K562 (cell line): ENCODE measurements at regions of chr1 and their contacts with region 1.

Region 1: DNA sequence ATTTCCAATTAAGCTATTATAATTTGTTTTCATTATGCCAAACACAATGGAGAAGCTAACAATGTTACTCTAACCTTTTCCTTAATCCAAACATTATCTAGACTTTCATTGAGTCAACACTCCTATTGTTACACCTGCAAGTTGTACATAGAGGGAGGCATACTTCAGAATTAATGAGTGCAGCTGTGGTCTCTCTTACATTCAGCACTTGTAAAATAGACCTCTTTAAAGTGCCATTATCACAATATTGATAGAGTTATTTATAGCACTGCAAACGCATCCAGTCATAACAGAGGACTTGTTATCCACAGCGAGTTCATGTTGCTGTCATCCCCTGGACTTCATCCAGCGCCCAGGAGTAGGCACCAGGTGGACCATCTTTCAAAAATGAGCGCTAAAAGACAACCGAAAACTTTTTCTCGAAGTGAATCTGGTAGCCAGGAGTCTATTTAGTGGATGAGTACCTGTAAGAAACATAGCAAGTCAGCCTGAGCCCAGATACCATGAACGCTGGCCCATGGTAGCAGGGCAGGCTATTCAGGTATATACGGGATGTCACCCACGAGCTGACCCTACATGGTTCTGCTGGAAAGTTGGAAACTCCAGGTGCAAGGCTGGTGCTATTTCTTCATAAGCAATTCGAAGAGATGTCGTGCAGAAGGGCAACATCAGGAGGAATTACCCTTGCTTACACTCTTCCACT is 70.6 kb upstream of the NFIA start:
- DNase-seq: peak in 1 of 4 experiments; percentile 21
- ATAC-seq: no peak
- H3K4me3 ChIP-seq: no peak overlapping the region
- H3K27ac ChIP-seq: peak overlapping the region; percentile 78
- H3K4me1 ChIP-seq: peaks cover 16 to 47% of the 10 kb centered on the region in 2 experiments; a peak in 4 of 5 replicates
- H3K27me3 ChIP-seq: no peaks in the 10 kb centered on the region
- CTCF ChIP-seq: no peak
- EP300 ChIP-seq: no peak
- POLR2A ChIP-seq: no peak
- RAD21 ChIP-seq: no peak

Region 2: GRCh38 chr1:60994369-60994768 is 17.3 kb before region 1 on chr1:
- CTCF ChIA-PET with region 1: no interaction called
- POLR2A ChIA-PET with region 1: interaction called, 7 read pairs
- in situ Hi-C with region 1: no loop called
- intact Hi-C with region 1: loop called (anchors 2 kb)
- DNase-seq: peak in 1 of 4 experiments; percentile 67
- ATAC-seq: peak; percentile 89
- H3K4me3 ChIP-seq: no peak overlapping the region
- H3K27ac ChIP-seq: no peak overlapping the region; the same call in 2 of the 3 replicates
- H3K4me1 ChIP-seq: peaks cover 3 to 23% of the 10 kb centered on the region in 2 experiments; a peak in 3 of 5 replicates
- H3K27me3 ChIP-seq: no peaks in the 10 kb centered on the region; a peak in 1 of 5 replicates
- CTCF ChIP-seq: no peak
- EP300 ChIP-seq: peak; percentile 25; the same call in 1 of the 2 replicates
- POLR2A ChIP-seq: no peak
- RAD21 ChIP-seq: no peak